Right ventricle myocardium inferior (tissue), 1 donor: ENCODE measurements at regions of chr5 and their contacts with region 1.

Region 1: GRCh38 chr5:16791036-16791705 is 144.9 kb downstream of the MYO10 start:
- DNase-seq: no peak
- ATAC-seq: no peak

Region 2: GRCh38 chr5:17189381-17190036 is 398.3 kb after region 1 on chr5:
- intact Hi-C with region 1: loop called (anchors 1 kb)
- DNase-seq: peak; percentile 81
- ATAC-seq: peak; percentile 51